ENCODE measurements at regions of chr17 and their contacts with region 1.

Region 1: GRCh38 chr17:1323336-1323735 is 43.9 kb downstream of the TRARG1 start:
- DNase-seq: no peak
- ATAC-seq: no peak
- H3K4me3 ChIP-seq: no peak overlapping the region
- H3K27ac ChIP-seq: no peak overlapping the region
- H3K4me1 ChIP-seq: no peaks in the 10 kb centered on the region
- H3K27me3 ChIP-seq: no peaks in the 10 kb centered on the region
- CTCF ChIP-seq: no peak

Region 2: DNA sequence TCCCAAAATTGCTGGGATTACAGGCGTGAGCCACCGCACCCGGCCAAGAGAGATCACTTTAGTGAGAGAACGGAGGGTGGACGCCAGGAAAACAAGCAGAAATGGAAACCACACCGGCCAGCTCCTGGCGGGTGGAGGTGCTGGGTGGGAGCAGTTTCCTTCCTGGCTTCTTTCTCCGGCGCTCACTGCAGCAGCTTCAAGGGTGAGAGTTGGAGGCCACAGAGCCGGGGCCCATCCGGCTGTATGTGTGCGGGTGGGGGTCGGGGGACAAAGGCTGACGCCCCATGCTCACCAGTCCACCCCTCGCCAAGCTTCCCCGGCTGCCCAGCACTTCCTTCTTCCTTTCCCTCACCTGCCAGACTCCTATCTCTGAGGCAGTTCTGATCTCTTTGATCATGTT is 66.6 kb before region 1 on chr17:
- CTCF ChIA-PET with region 1: no interaction called
- POLR2A ChIA-PET with region 1: no interaction called
- in situ Hi-C with region 1: no loop called
- intact Hi-C with region 1: loop called (anchors 5 kb)
- DNase-seq: no peak
- ATAC-seq: no peak
- H3K4me3 ChIP-seq: no peak overlapping the region
- H3K27ac ChIP-seq: no peak overlapping the region
- H3K4me1 ChIP-seq: no peaks in the 10 kb centered on the region
- H3K27me3 ChIP-seq: no peaks in the 10 kb centered on the region
- CTCF ChIP-seq: no peak

Region 3: DNA sequence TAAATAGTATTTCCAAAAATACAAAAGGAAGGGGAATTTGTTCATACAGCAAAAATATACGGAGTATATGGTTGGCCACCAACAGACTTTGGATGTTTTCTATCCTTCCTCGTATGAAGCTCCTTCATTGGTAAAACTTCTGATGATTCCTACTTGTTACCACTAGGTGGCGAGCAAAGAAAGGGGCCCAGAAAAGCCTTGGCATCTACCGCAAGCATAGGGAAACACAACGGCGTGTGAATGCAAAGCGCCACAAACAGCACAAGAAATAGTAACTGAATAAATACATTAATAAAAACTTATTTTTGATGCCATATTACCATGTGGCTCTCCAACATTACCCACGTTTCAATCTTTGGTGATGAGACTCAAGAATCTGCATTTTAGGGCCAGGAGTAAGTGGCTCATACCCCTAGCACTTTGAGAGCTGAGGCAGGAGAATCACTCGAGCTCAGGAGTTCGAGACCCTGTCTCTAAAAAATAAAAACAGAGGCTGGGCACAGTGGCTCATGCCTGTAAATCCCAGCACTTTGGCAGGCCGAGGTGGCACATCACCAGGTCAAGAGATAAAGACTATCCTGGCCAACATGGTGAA is 42.2 kb after region 1 on chr17:
- CTCF ChIA-PET with region 1: no interaction called
- POLR2A ChIA-PET with region 1: no interaction called
- in situ Hi-C with region 1: no loop called
- intact Hi-C with region 1: no loop called
- DNase-seq: peak; percentile 45
- ATAC-seq: peak; percentile 81
- H3K4me3 ChIP-seq: no peak overlapping the region
- H3K27ac ChIP-seq: peak overlapping the region; percentile 50; the same call in 1 of the 2 replicates
- H3K4me1 ChIP-seq: peaks cover 47% of the 10 kb centered on the region
- H3K27me3 ChIP-seq: no peaks in the 10 kb centered on the region
- CTCF ChIP-seq: peak; percentile 91

Measured in Panc1 (cell line).